Dendritic cell treated with granulocyte-macrophage colony-stimulating factor and Interleukin-4, amounts not matched to agents 40 ng/mL and 50 ng/mL, for 4 days (primary cell): ENCODE measurements at regions of chr11 and their contacts with region 1.

Region 1: GRCh38 chr11:77449060-77449521 is 24.8 kb downstream of the PAK1 start:
- H3K4me3 Mint-ChIP-seq: no peak overlapping the region
- H3K27ac Mint-ChIP-seq: peak overlapping the region; percentile 48
- H3K4me1 Mint-ChIP-seq: peaks cover 62% of the 10 kb centered on the region
- H3K27me3 Mint-ChIP-seq: no peaks in the 10 kb centered on the region

Region 2: DNA sequence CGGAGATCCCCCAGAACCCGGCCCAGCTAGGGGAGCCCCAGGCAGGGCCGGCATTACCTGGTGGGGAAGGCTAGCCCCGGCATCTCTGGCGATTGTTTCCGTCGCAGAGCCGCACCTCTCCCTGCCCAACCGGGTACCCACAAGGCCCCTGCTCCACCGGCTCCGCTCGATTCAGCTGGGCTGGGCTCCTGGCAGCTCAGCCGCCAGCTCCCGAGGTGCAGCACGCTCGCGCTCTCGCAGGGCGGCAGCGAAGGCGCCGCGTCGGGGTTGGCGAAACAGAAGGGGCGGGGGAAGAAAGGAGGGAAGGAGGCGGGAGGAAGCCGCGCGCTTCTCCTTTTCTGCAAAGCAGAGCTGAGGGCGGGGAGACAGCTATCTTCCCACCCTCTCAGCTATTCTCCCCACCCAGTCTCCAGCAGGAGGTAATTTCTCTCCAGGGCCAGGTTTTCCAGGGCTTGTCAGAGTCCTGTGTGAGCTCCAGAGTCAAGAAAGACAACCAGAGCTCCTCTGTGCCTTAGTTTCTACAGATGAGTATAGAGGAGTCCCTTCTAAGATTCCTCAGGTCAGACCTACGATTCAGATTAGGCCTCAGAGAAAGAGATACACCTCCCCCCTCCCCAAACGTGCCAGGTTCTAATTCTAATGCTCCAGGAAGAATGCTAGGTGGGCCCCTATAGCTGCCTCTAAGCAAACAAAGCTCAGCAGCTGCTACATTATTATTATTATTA is 37.2 kb before region 1 on chr11:
- intact Hi-C with region 1: loop called (anchors 5 kb)
- H3K4me3 Mint-ChIP-seq: peak overlapping the region; percentile 98
- H3K27ac Mint-ChIP-seq: peak overlapping the region; percentile 96
- H3K4me1 Mint-ChIP-seq: peaks cover 6% of the 10 kb centered on the region
- H3K27me3 Mint-ChIP-seq: no peaks in the 10 kb centered on the region

Region 3: GRCh38 chr11:77506857-77507256 is 57.8 kb after region 1 on chr11:
- intact Hi-C with region 1: no loop called
- H3K4me3 Mint-ChIP-seq: no peak overlapping the region
- H3K27ac Mint-ChIP-seq: no peak overlapping the region
- H3K4me1 Mint-ChIP-seq: peaks cover 36% of the 10 kb centered on the region
- H3K27me3 Mint-ChIP-seq: peaks cover 2% of the 10 kb centered on the region